AG04449 (cell line): ENCODE measurements at regions of chr2 and their contacts with region 1.

Region 1: GRCh38 chr2:45119855-45120254 is 110.6 kb upstream of the SIX2 start:
- DNase-seq: peak; percentile 91
- H3K4me3 ChIP-seq: no peak overlapping the region
- CTCF ChIP-seq: no peak

Region 2: GRCh38 chr2:45224321-45224992 is 104.6 kb after region 1 on chr2:
- CTCF ChIA-PET with region 1: no interaction called
- POLR2A ChIA-PET with region 1: no interaction called
- DNase-seq: no peak
- H3K4me3 ChIP-seq: no peak overlapping the region
- CTCF ChIP-seq: no peak

Region 3: GRCh38 chr2:45380131-45380836 is 260.4 kb after region 1 on chr2:
- CTCF ChIA-PET with region 1: no interaction called
- POLR2A ChIA-PET with region 1: no interaction called
- DNase-seq: no peak
- H3K4me3 ChIP-seq: no peak overlapping the region
- CTCF ChIP-seq: no peak

Region 4: GRCh38 chr2:45435316-45435715 is 315.5 kb after region 1 on chr2:
- CTCF ChIA-PET with region 1: no interaction called
- POLR2A ChIA-PET with region 1: interaction called, 10 read pairs
- DNase-seq: peak; percentile 97
- H3K4me3 ChIP-seq: no peak overlapping the region
- CTCF ChIP-seq: no peak